Heart left ventricle (tissue), 16 donors: ENCODE measurements at regions of chr19 and their contacts with region 1.

Region 1: DNA sequence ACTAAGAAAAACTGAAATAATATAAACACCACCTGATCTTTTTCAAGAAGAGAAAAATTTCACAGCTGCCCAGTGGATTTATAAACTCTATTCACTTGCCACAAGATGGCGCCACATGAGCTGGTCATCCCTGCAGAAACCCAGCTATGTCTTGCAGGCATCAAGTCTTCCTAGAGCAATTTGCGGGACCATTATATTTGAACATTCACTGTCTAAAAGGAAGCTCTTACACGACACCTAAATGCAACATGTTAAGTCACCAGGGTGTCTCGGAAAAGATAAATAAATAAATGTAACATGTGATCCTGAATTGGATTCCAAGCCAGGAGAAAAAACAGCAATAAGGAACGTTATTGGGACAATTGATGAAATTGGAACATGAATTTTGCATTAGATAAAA is 20.3 kb upstream of the AKT2 start:
- DNase-seq: peak; percentile 81 to 83 (median 82)
- ATAC-seq: peak; percentile 58 to 83 (median 75)
- H3K4me3 ChIP-seq: no peak overlapping the region
- H3K27ac ChIP-seq: no peak overlapping the region
- H3K4me1 ChIP-seq: peaks cover 0 to 5% (median 0%) of the 10 kb centered on the region in 12 donors
- H3K27me3 ChIP-seq: no peaks in the 10 kb centered on the region
- CTCF ChIP-seq: peak; percentile 63 to 86 (median 77)
- POLR2A ChIP-seq: no peak

Region 2: GRCh38 chr19:40139533-40140287 is 165.7 kb before region 1 on chr19:
- intact Hi-C with region 1: loop called in 1 of 10 experiments (anchors 2 kb)
- DNase-seq: no peak
- ATAC-seq: peak in 1 of 4 donors; percentile 41
- H3K4me3 ChIP-seq: no peak overlapping the region
- H3K27ac ChIP-seq: no peak overlapping the region
- H3K4me1 ChIP-seq: peaks cover 0 to 30% (median 10%) of the 10 kb centered on the region in 12 donors
- H3K27me3 ChIP-seq: peaks cover 0 to 14% (median 4%) of the 10 kb centered on the region in 9 donors
- CTCF ChIP-seq: peak; percentile 49 to 81 (median 67)
- POLR2A ChIP-seq: no peak

Region 3: GRCh38 chr19:40381321-40381720 is 75.9 kb after region 1 on chr19:
- intact Hi-C with region 1: no loop called
- DNase-seq: no peak
- ATAC-seq: no peak
- H3K4me3 ChIP-seq: no peak overlapping the region
- H3K27ac ChIP-seq: no peak overlapping the region
- H3K4me1 ChIP-seq: no peaks in the 10 kb centered on the region
- H3K27me3 ChIP-seq: no peaks in the 10 kb centered on the region
- CTCF ChIP-seq: no peak
- POLR2A ChIP-seq: no peak

Region 4: GRCh38 chr19:40523322-40524047 is 218.1 kb after region 1 on chr19:
- intact Hi-C with region 1: loop called in 6 of 10 experiments (anchors 5 to 10 kb)
- DNase-seq: peak in 2 of 5 donors; percentile 44 to 48
- ATAC-seq: peak in 3 of 4 donors; percentile 56 to 77 (median 62)
- H3K4me3 ChIP-seq: no peak overlapping the region
- H3K27ac ChIP-seq: no peak overlapping the region
- H3K4me1 ChIP-seq: peaks cover 0 to 11% (median 0%) of the 10 kb centered on the region in 12 donors
- H3K27me3 ChIP-seq: peaks cover 0 to 23% (median 0%) of the 10 kb centered on the region in 9 donors
- CTCF ChIP-seq: peak in 10 of 12 donors; percentile 22 to 62 (median 46)
- POLR2A ChIP-seq: no peak

Region 5: DNA sequence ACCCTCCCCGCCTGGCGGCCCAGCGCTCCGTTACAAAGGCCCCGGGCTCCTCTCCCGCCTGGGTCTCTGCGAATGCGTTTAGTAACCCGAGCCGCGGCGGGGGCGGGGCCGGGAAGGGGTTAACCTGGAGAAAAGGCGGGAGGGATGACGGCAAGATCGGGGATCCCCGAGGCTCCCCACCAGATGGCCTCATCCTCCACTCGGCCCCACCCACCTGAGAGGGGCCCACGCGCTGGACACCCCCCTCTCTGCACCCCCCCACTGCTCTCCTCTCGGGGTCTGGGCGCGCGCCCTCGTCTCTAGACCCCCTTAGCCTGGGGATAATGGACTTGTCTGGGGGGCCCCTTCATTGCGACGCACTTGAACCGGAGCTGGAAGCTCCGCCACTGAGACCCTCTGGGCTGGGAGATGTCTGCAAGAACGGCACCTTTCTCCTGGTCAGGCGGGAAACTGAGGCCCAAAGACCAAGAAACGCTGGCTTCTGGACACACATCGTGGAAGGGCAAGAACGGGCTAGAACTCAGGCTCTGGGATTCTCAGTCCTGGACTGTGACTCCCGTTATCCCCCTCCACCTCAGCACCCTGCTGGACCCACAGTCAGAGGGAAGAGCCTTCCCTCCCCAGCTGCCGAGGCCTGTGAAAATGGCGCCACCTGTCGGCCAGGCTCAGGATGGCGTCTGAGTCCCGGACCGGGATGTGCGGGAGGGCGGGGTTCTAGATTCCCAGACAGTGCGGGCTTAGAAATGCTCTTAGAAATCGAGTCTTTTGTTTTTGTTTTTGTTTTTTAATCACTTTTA is 292.9 kb after region 1 on chr19:
- intact Hi-C with region 1: loop called in 9 of 10 experiments (anchors 1 to 10 kb)
- DNase-seq: peak; percentile 85 to 93 (median 89)
- ATAC-seq: peak; percentile 57 to 74 (median 60)
- H3K4me3 ChIP-seq: peak overlapping the region in 7 of 12 donors; percentile 4 to 96 (median 72)
- H3K27ac ChIP-seq: peak overlapping the region in 6 of 12 donors; percentile 5 to 97 (median 84)
- H3K4me1 ChIP-seq: peaks cover 0 to 67% (median 52%) of the 10 kb centered on the region in 12 donors
- H3K27me3 ChIP-seq: peaks cover 9 to 63% (median 20%) of the 10 kb centered on the region in 9 donors
- CTCF ChIP-seq: peak; percentile 93 to 99 (median 98)
- POLR2A ChIP-seq: no peak

Region 6: GRCh38 chr19:40633207-40633606 is 327.8 kb after region 1 on chr19:
- intact Hi-C with region 1: loop called in 3 of 10 experiments (anchors 10 kb)
- DNase-seq: no peak
- ATAC-seq: no peak
- H3K4me3 ChIP-seq: no peak overlapping the region
- H3K27ac ChIP-seq: no peak overlapping the region
- H3K4me1 ChIP-seq: peaks cover 0 to 19% (median 7%) of the 10 kb centered on the region in 12 donors
- H3K27me3 ChIP-seq: no peaks in the 10 kb centered on the region
- CTCF ChIP-seq: no peak
- POLR2A ChIP-seq: no peak